HEK293 (cell line): ENCODE measurements at regions of chr14 and their contacts with region 1.

Region 1: DNA sequence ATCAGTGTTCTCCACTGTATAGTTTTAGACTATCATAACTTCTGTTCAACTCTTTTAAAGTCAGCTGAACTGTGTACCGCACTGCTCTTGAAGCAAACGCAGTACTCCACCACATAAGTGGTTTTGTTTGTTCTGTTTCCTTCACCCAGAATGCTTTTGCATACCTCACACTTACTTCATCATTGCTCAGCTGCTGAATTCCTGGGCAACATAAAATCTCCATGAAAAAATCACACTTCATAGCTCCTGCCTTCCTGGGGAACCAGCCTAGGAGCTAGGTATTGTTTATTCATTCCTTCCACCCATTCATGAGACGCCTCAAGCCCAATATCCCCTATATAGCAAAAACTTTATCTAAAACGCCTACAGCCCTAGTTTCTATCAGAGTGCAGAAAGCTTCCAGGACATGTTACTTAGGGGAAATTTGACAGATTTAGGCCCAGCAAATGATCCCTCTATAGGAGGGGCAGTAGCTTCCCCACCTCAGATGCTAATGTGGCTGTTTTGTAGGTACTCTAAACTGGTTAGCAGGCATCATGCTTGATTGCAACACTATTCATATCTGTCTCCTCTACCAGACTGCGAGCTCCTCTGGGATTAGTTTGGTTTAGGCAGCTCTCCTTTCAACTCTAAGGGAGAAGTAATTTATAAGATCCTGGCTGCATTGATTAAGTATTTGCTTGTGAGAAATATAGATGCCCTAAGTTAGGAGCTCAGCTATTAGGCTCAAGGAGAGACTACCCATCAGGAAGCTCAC is 44.5 kb downstream of the LRRC9 start:
- H3K4me3 ChIP-seq: no peak overlapping the region
- H3K27ac ChIP-seq: no peak overlapping the region
- H3K4me1 ChIP-seq: no peaks in the 10 kb centered on the region
- CTCF ChIP-seq: no peak

Region 2: DNA sequence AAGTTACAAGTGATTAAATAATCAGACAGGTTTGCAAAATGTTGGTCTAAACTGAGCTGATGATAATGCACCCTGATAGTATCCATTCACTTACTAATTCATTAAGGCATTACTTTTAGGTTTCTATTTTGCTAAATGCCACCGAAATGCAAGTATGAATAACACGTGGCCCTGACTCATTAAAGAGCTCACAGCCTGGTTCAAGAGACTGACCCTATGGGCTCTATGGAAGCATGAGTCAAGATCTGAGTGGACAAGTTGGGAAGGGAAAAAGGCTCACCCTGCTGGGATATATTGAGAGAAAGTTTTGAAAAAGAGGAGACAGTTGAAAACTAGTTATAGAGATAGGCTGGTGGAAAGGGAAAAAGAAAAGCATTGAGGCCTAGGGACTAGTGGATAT is 59.2 kb before region 1 on chr14:
- CTCF ChIA-PET with region 1: no interaction called
- POLR2A ChIA-PET with region 1: no interaction called
- H3K4me3 ChIP-seq: no peak overlapping the region
- H3K27ac ChIP-seq: no peak overlapping the region
- H3K4me1 ChIP-seq: no peaks in the 10 kb centered on the region
- CTCF ChIP-seq: no peak

Region 3: DNA sequence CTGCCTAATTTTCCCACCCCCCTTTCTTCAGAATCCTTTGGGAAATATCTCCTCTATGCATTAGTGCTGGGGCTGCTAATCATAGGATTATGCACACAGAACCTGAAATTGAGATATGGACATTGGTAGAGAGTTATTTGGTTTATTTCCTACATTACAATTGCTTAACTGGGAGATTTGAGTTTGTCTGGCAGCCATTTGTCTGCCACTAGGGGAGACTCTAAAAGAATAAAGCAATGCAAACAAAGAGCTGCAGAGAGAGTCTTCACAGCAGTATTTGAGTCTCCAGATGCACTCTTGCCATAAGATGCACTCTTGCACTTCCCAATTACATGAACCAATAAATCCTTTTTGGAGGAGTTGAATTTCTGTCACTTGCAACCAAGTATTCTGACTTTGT is 115.3 kb after region 1 on chr14:
- CTCF ChIA-PET with region 1: no interaction called
- POLR2A ChIA-PET with region 1: no interaction called
- H3K4me3 ChIP-seq: no peak overlapping the region
- H3K27ac ChIP-seq: no peak overlapping the region
- H3K4me1 ChIP-seq: no peaks in the 10 kb centered on the region
- CTCF ChIP-seq: no peak

Region 4: DNA sequence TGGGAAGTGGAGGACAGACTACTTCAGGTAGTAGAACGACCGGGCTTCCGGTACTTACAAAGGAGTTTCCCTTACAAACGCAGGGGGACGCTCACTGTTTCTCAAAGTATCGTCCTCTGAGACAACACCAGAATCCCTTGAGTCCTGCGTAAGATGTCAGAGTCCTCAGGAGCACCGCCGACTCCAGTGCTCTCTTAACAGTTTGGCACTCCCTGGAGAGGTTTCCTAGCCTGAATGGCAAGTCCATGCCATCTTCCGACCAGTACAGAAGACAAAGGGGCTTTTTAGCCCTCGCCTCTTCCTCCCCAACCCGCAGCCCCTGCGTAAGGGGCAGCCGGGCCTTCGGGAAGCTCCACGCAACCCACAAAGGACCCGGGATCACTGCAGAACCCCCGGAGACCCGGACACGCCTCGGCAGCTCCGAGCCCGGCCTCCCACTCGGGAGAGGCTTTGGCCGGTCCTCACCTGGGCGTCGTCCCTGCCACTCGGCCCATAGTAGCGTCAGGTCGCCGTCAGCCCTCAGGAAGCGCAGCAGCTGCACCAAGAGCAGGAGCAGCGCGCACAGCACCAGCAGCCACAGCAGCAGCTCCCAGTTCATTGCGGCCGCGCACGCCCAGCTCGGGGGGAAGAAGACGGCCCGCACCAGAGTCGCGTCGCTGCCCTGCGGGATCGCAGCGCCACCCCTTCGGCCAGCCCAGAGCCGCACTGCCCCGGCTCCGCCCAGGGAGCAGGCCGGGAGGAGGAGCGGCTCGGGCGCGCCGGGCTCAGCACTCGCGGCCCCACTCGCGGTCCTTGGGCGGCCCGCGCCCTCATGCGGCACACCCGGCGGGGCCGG is 200.5 kb after region 1 on chr14 and contains the start of gene DHRS7:
- CTCF ChIA-PET with region 1: interaction called, 11 read pairs
- POLR2A ChIA-PET with region 1: no interaction called
- H3K4me3 ChIP-seq: peak within 1 kb of the TSS; percentile 93
- H3K27ac ChIP-seq: peak within 1 kb of the TSS; percentile 79
- H3K4me1 ChIP-seq: peaks cover 8% of the 10 kb centered on the region; the same call in 1 of the 2 replicates
- CTCF ChIP-seq: peak; percentile 70